Common myeloid progenitor, CD34-positive (primary cell): ENCODE measurements at regions of chr5 and their contacts with region 1.

Region 1: DNA sequence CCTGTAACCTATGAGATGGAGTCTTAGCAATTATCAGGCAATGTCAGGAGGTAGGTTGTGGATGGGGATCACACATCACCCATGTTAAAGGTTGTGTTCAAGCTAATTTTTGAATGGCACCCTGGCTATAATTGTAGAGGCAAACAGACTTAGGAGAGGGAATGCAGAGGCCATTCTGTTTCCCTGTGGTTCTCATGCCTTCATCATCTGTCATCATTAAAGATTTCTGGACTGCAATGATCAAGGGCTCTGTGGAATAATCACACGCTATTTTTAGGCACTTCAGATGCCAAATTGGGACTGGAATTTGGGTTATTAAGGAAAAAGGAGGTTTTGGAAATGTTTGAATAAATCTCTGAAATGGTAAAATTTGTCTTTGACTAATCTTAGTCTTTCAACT is 1065.4 kb downstream of the TAF11L14 start:
- DNase-seq: no peak
- H3K4me3 ChIP-seq: no peak overlapping the region
- H3K27ac ChIP-seq: no peak overlapping the region
- H3K4me1 ChIP-seq: peaks cover 6 to 50% (median 10%) of the 10 kb centered on the region in 4 experiments
- H3K27me3 ChIP-seq: no peaks in the 10 kb centered on the region

Region 2: DNA sequence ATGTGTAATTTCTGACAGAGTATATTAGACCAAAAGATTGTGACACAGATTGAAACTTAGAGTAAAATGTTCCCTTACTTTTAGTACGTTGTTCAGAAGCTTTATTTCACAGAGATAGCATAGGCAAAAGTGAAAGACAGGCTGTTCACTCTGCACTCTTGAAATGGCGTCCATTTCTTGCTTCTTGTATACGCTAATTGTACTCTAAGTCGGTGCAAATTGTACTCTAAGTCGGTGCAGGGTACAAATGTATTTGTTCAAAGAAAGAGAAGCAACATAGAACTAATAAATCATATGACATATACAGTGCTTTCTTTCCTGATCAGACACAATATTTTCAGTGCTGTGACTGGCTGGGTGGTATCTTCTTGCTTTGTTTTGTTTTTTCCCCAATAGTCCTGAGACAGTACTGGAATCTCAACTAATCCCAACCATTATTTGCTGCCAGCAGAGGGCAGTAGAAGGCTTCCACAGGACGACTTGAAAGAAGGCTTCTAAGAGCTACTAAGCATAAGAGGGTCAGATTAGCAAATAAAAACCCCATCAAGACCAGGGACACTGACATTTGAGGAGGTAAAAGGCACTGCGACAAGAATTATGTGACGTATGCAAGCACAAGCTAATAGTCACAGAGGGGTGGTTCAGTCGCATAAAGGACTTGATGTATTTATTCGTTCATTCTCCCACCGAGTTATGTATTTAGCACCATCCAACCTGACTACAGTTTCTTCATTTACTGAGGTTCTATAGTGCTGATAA is 233.7 kb before region 1 on chr5:
- CTCF ChIA-PET with region 1: interaction called, 23 read pairs
- POLR2A ChIA-PET with region 1: no interaction called
- DNase-seq: peak; percentile 48 to 85 (median 78)
- H3K4me3 ChIP-seq: no peak overlapping the region
- H3K27ac ChIP-seq: no peak overlapping the region
- H3K4me1 ChIP-seq: no peaks in the 10 kb centered on the region
- H3K27me3 ChIP-seq: no peaks in the 10 kb centered on the region

Region 3: GRCh38 chr5:18720002-18720401 is 20.3 kb after region 1 on chr5:
- CTCF ChIA-PET with region 1: interaction called, 10 read pairs
- POLR2A ChIA-PET with region 1: no interaction called
- DNase-seq: no peak
- H3K4me3 ChIP-seq: no peak overlapping the region
- H3K27ac ChIP-seq: no peak overlapping the region
- H3K4me1 ChIP-seq: peaks cover 0 to 4% (median 0%) of the 10 kb centered on the region in 4 experiments
- H3K27me3 ChIP-seq: no peaks in the 10 kb centered on the region